ENCODE measurements at regions of chr1 and their contacts with region 1.

Region 1: GRCh38 chr1:186404454-186405051 is 28.9 kb downstream of the ODR4 start:
- DNase-seq: no peak
- ATAC-seq: no peak
- H3K4me3 ChIP-seq: no peak overlapping the region
- H3K27ac ChIP-seq: no peak overlapping the region
- H3K4me1 ChIP-seq: no peaks in the 10 kb centered on the region
- H3K27me3 ChIP-seq: no peaks in the 10 kb centered on the region
- CTCF ChIP-seq: peak in 2 of 5 experiments; percentile 43 to 50
- POLR2A ChIP-seq: no peak

Region 2: DNA sequence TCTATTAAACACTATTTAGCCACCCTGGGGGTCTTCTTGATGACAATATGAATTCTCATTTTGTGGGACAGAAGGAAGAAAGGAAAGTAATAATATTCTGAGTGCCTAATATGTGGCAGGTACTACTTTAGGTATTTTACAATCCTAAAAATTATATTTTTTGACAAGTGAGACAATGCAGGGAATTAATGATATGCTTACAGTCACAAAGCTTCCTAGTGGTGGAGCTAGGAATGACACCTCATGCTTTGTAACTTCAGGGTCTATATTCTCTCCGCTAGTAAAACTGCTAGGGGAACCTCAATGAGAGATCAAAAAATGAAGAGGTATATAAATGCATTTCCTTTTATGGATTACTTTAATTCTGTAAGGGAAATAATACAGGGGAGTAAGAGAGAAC is 73.8 kb before region 1 on chr1:
- in situ Hi-C with region 1: loop called in 1 of 4 experiments (anchors 10 kb)
- intact Hi-C with region 1: no loop called
- DNase-seq: no peak
- ATAC-seq: no peak
- H3K4me3 ChIP-seq: no peak overlapping the region
- H3K27ac ChIP-seq: no peak overlapping the region
- H3K4me1 ChIP-seq: no peaks in the 10 kb centered on the region
- H3K27me3 ChIP-seq: no peaks in the 10 kb centered on the region
- CTCF ChIP-seq: peak in 1 of 5 experiments; percentile 22
- POLR2A ChIP-seq: no peak

Region 3: DNA sequence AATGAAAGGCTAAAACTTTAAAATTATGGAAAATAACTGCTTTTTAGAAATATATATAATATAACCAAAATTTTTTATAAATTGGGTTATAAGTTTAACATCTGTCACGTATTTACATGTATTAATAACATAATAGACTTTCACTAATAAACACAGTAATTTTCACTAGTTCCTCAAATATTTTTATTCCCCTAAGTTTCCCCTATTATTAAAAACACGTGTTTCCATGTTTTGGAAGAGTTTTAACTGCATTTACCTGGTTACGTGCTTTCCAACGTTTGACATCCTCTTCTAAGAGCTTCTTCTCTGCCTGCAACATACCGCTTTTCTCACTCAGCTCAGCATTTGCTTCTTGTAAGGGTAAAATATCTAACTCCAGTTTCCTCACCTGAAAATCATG is 63.8 kb before region 1 on chr1:
- in situ Hi-C with region 1: loop called in 1 of 4 experiments (anchors 10 kb)
- intact Hi-C with region 1: loop called (anchors 5 kb)
- DNase-seq: no peak
- ATAC-seq: no peak
- H3K4me3 ChIP-seq: no peak overlapping the region
- H3K27ac ChIP-seq: no peak overlapping the region
- H3K4me1 ChIP-seq: no peaks in the 10 kb centered on the region
- H3K27me3 ChIP-seq: no peaks in the 10 kb centered on the region
- CTCF ChIP-seq: no peak
- POLR2A ChIP-seq: no peak